ENCODE measurements at regions of chr17 and their contacts with region 1.

Region 1: GRCh38 chr17:58337600-58338453 is 9.2 kb upstream of the TSPOAP1 start:
- DNase-seq: peak; percentile 81 to 96 (median 92)
- ATAC-seq: peak; percentile 72
- H3K4me3 ChIP-seq: peak overlapping the region; percentile 90 to 99
- H3K4me3 Mint-ChIP-seq: peak overlapping the region; percentile 92
- H3K27ac ChIP-seq: peak overlapping the region; percentile 92 to 99
- H3K27ac Mint-ChIP-seq: peak overlapping the region; percentile 97
- H3K4me1 ChIP-seq: peaks cover 72% of the 10 kb centered on the region
- H3K4me1 Mint-ChIP-seq: peaks cover 83% of the 10 kb centered on the region
- H3K27me3 ChIP-seq: no peaks in the 10 kb centered on the region
- H3K27me3 Mint-ChIP-seq: no peaks in the 10 kb centered on the region
- CTCF ChIP-seq: no peak

Region 2: GRCh38 chr17:58289869-58290268 is 48.0 kb before region 1 on chr17:
- CTCF ChIA-PET with region 1: no interaction called
- POLR2A ChIA-PET with region 1: no interaction called
- intact Hi-C with region 1: no loop called
- DNase-seq: no peak
- ATAC-seq: no peak
- H3K4me3 ChIP-seq: no peak overlapping the region
- H3K4me3 Mint-ChIP-seq: no peak overlapping the region
- H3K27ac ChIP-seq: no peak overlapping the region
- H3K27ac Mint-ChIP-seq: no peak overlapping the region
- H3K4me1 ChIP-seq: no peaks in the 10 kb centered on the region
- H3K4me1 Mint-ChIP-seq: no peaks in the 10 kb centered on the region
- H3K27me3 ChIP-seq: no peaks in the 10 kb centered on the region
- H3K27me3 Mint-ChIP-seq: peaks cover 14% of the 10 kb centered on the region
- CTCF ChIP-seq: no peak

Region 3: GRCh38 chr17:58303971-58304725 is 33.7 kb before region 1 on chr17:
- CTCF ChIA-PET with region 1: interaction called, 12 read pairs
- POLR2A ChIA-PET with region 1: no interaction called
- intact Hi-C with region 1: no loop called
- DNase-seq: peak; percentile 35 to 73 (median 57)
- ATAC-seq: peak; percentile 97
- H3K4me3 ChIP-seq: no peak overlapping the region
- H3K4me3 Mint-ChIP-seq: no peak overlapping the region
- H3K27ac ChIP-seq: no peak overlapping the region
- H3K27ac Mint-ChIP-seq: no peak overlapping the region
- H3K4me1 ChIP-seq: peaks cover 6% of the 10 kb centered on the region
- H3K4me1 Mint-ChIP-seq: peaks cover 6% of the 10 kb centered on the region
- H3K27me3 ChIP-seq: no peaks in the 10 kb centered on the region
- H3K27me3 Mint-ChIP-seq: no peaks in the 10 kb centered on the region
- CTCF ChIP-seq: peak; percentile 74

Region 4: DNA sequence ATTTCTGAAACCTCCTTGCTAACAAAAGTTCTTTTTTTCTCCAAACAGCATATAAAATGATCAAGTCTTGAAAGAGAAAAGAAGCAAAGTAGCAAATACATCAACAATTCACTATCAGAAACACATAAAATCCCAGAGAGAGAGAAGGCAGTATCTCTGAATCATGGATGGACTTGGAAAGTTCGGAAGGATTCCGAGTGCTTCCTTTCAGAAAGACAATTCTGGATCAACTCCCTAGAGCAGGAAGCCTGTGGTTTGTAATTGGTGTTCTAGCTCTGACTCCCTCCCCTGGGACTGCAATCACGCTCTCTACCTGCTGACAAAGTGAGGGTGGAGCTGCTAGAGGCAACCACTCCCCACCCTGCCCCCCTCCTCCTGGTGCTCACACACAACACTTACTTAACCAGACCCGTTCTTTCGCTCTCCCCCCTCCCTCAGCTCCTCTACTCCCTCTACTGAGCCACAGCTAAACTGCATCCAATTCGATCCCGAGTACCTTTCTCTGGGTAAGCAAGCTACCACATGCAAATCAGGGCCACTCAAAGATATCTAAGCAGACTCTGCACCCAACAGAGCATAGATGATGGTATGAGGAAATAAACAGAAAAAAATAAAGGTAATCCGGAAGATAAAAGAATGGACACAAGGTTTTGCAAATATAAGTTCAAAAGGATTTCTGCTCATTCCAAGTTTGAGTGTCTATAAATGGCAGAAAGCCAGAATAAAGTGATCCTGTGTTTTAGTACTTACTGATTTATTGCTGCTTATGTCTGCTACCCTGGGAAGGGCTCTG is 79.7 kb after region 1 on chr17 and contains the start of gene RNF43:
- CTCF ChIA-PET with region 1: interaction called, 18 read pairs
- POLR2A ChIA-PET with region 1: interaction called, 10 read pairs
- intact Hi-C with region 1: no loop called
- DNase-seq: peak; percentile 70 to 96 (median 87)
- ATAC-seq: peak; percentile 100
- H3K4me3 ChIP-seq: no peak within 1 kb of the TSS
- H3K4me3 Mint-ChIP-seq: no peak within 1 kb of the TSS
- H3K27ac ChIP-seq: peak within 1 kb of the TSS in 1 of 2 experiments; percentile 47
- H3K27ac Mint-ChIP-seq: peak within 1 kb of the TSS; percentile 3
- H3K4me1 ChIP-seq: peaks cover 15% of the 10 kb centered on the region
- H3K4me1 Mint-ChIP-seq: peaks cover 17% of the 10 kb centered on the region
- H3K27me3 ChIP-seq: no peaks in the 10 kb centered on the region
- H3K27me3 Mint-ChIP-seq: no peaks in the 10 kb centered on the region
- CTCF ChIP-seq: peak; percentile 75
- total RNA-seq, gene RNF43: 0.61 to 1.0 TPM

Region 5: GRCh38 chr17:58565780-58566189 is 228.0 kb after region 1 on chr17:
- CTCF ChIA-PET with region 1: no interaction called
- POLR2A ChIA-PET with region 1: no interaction called
- intact Hi-C with region 1: no loop called
- DNase-seq: no peak
- ATAC-seq: no peak
- H3K4me3 ChIP-seq: no peak overlapping the region
- H3K4me3 Mint-ChIP-seq: no peak overlapping the region
- H3K27ac ChIP-seq: no peak overlapping the region
- H3K27ac Mint-ChIP-seq: no peak overlapping the region
- H3K4me1 ChIP-seq: no peaks in the 10 kb centered on the region
- H3K4me1 Mint-ChIP-seq: no peaks in the 10 kb centered on the region
- H3K27me3 ChIP-seq: no peaks in the 10 kb centered on the region
- H3K27me3 Mint-ChIP-seq: no peaks in the 10 kb centered on the region
- CTCF ChIP-seq: no peak

Region 6: DNA sequence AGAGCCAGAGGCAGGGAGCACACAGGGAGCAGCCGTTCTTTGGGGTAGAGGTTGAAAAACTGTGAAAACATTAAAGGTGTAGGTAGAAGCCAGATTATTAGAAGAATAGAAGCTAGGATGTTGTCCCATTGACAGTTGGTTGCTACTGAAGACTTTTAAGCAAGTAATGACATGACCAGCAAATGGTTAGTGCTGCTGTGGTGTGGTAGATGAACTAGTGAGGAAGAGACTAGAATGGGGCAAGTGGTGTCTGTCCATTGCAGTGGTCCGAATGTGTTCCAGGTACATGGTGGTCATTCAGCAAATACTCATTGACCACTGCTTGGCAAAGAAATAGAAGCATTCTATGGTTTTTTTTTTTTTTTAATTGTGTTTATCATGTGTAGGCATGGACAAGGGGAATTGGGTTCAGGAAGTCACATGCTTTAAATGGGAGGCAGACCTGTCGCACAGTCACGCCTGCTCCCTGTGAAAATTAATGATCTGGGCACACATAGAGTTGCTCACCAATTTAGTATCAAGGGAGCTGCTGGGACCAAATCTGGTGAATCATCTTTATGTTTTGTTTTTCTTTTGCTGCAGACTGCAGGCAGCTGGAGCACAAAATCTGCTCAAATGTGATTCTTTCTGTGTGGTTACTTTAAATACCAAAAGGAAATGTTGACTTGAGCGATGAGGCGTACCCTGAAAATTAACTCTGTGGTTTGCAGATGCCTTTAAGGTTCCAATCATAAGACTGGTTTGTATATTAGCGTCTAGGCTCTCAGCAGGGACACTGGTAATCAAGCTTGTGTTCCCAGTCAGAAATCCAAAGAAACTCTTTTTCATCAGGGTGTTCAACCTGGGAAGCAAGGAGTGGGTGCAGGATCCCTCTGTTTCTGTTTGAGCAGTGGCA is 1024.3 kb after region 1 on chr17:
- CTCF ChIA-PET with region 1: no interaction called
- POLR2A ChIA-PET with region 1: no interaction called
- intact Hi-C with region 1: loop called in 1 of 2 experiments (anchors 10 kb)
- DNase-seq: peak in 8 of 9 experiments; percentile 15 to 74 (median 50)
- ATAC-seq: peak; percentile 64
- H3K4me3 ChIP-seq: peak overlapping the region; percentile 16 to 44
- H3K4me3 Mint-ChIP-seq: peak overlapping the region; percentile 80
- H3K27ac ChIP-seq: peak overlapping the region; percentile 47 to 51
- H3K27ac Mint-ChIP-seq: peak overlapping the region; percentile 99
- H3K4me1 ChIP-seq: peaks cover 86% of the 10 kb centered on the region
- H3K4me1 Mint-ChIP-seq: peaks cover 88% of the 10 kb centered on the region
- H3K27me3 ChIP-seq: no peaks in the 10 kb centered on the region
- H3K27me3 Mint-ChIP-seq: no peaks in the 10 kb centered on the region
- CTCF ChIP-seq: no peak

Measured in CD8-positive, alpha-beta T cell (primary cell).